Posterior cingulate gyrus (tissue), 11 donors: ENCODE measurements at regions of chr12 and their contacts with region 1.

Region 1: GRCh38 chr12:40152783-40153383 is 47.0 kb upstream of the SLC2A13 start:
- DNase-seq: peak in 9 of 10 donors; percentile 11 to 85 (median 45)

Region 2: GRCh38 chr12:40033242-40033630 is 119.6 kb before region 1 on chr12:
- intact Hi-C with region 1: no loop called
- DNase-seq: peak in 1 of 10 donors; percentile 59

Region 3: GRCh38 chr12:40208707-40209446 is 56.0 kb after region 1 on chr12:
- intact Hi-C with region 1: no loop called
- DNase-seq: peak in 1 of 10 donors; percentile 43

Region 4: GRCh38 chr12:40312982-40313576 is 160.2 kb after region 1 on chr12:
- intact Hi-C with region 1: loop called (anchors 5 kb)
- DNase-seq: no peak

Region 5: GRCh38 chr12:40405419-40405818 is 252.5 kb after region 1 on chr12:
- intact Hi-C with region 1: no loop called
- DNase-seq: no peak